A549 (cell line): ENCODE measurements at regions of chr22 and their contacts with region 1.

Region 1: GRCh38 chr22:40024201-40025061 is 29.7 kb downstream of the FAM83F start:
- DNase-seq: peak; percentile 62 to 75
- ATAC-seq: peak; percentile 86 to 96
- H3K4me3 ChIP-seq: no peak overlapping the region
- H3K27ac ChIP-seq: no peak overlapping the region
- H3K4me1 ChIP-seq: no peaks in the 10 kb centered on the region
- CTCF ChIP-seq: peak; percentile 83
- EP300 ChIP-seq: no peak
- POLR2A ChIP-seq: no peak
- RAD21 ChIP-seq: peak; percentile 89 to 90

Region 2: DNA sequence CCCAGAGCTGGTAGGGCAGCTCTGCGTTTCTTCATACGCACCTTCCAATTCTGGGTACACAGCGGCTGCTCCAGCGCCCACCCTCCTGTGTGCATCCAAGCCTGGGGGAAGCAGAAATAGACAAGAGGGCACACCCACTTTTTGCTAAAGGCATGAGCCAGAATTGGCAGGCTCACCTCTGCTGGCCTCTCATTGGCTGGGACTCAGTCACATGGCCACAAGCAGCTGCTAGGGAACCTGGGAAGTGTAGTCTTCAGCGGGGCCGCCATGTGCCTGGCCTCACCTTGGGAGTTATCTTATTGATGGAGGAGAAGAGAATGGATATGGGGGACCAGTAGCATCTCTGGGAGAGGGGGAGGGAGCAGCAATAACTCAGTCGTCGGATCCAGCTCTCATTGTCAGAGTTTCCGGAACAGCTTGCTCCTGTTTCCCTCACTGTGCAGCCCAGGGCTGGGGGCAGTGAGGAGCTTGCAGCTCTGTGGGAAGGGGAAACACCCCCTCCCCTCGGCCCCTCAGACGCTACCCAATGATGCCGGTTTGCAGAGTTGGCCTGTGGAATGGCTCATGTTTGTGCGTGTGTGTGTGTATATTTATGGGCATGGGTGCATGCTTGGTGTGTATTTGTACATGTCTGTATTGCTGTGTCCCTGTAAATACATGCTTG is 534.2 kb before region 1 on chr22:
- CTCF ChIA-PET with region 1: interaction called, 11 read pairs
- POLR2A ChIA-PET with region 1: no interaction called
- DNase-seq: peak; percentile 74 to 87
- ATAC-seq: peak; percentile 88 to 96
- H3K4me3 ChIP-seq: no peak overlapping the region
- H3K27ac ChIP-seq: no peak overlapping the region
- H3K4me1 ChIP-seq: no peaks in the 10 kb centered on the region
- CTCF ChIP-seq: no peak
- EP300 ChIP-seq: no peak
- POLR2A ChIP-seq: no peak
- RAD21 ChIP-seq: no peak

Region 3: DNA sequence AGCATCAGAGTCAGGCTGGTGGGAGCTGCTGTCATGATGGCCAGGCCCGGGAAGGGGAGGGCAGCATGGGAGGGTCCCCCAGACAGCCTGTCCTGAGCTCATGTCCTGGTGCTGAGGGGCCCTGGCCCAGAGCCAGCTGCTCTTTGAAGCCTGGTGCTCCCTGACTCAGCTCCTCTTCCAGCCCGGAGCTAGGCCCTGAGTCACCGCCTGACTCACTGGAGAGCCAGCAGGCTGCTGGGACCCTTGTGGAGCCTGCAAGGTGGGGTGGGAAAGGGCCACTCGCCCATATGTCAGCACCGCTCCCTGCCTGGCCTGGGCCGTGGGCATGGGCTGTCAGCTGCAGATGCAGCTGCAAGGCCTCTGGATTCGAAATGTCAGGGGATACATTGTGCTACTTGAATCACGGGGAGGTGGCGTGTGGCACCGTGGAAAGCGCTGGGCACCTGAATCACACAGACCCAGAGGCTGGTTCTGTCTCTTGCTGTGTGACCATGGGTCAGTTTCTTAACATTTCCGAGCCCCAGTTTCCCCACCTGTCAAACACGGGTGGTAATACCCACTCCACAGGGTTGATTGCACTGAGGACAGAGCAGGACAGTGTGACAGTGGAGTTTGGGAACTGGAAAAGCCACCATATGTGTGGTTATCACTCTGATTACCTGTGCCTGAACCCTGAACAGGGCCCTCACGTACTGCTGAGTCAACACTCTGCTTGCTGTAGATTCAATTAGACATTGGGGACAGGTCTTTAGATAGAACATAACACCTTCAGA is 449.5 kb before region 1 on chr22:
- CTCF ChIA-PET with region 1: interaction called, 10 read pairs
- POLR2A ChIA-PET with region 1: no interaction called
- DNase-seq: peak; percentile 54 to 78
- ATAC-seq: peak; percentile 75 to 87
- H3K4me3 ChIP-seq: no peak overlapping the region
- H3K27ac ChIP-seq: peak overlapping the region; percentile 55 to 80
- H3K4me1 ChIP-seq: peaks cover 18% of the 10 kb centered on the region
- CTCF ChIP-seq: no peak
- EP300 ChIP-seq: no peak
- POLR2A ChIP-seq: no peak
- RAD21 ChIP-seq: no peak

Region 4: DNA sequence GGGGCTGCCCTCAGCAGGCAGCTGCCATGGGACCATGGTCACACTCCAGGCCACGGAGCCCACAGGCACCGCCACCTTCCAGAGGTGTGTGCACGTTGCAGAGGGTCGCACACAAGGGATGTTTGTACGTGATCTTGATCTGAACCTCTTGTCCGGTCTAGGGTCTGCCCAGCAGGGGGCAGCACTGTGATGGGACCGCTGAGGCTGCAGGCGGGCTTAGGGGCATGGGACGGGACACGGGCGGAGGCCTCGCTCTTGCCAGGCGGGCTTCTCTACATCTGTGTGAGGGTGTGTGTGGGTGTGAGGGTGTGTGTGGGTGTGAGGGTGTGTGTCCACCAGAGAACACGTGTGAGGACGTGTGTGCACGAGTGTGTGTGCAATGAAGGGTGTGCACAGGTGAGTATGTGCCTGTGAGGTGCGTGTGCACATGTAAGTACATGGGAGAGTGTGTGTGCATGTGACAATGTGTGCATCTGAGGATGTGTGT is 401.5 kb before region 1 on chr22:
- CTCF ChIA-PET with region 1: interaction called, 11 read pairs
- POLR2A ChIA-PET with region 1: no interaction called
- DNase-seq: peak; percentile 18 to 46
- ATAC-seq: peak; percentile 32 to 86; a peak in 4 of 6 replicates
- H3K4me3 ChIP-seq: no peak overlapping the region
- H3K27ac ChIP-seq: no peak overlapping the region
- H3K4me1 ChIP-seq: no peaks in the 10 kb centered on the region
- CTCF ChIP-seq: peak; percentile 47
- EP300 ChIP-seq: no peak
- POLR2A ChIP-seq: no peak
- RAD21 ChIP-seq: peak; percentile 48 to 58; a peak in 4 of 5 replicates

Region 5: DNA sequence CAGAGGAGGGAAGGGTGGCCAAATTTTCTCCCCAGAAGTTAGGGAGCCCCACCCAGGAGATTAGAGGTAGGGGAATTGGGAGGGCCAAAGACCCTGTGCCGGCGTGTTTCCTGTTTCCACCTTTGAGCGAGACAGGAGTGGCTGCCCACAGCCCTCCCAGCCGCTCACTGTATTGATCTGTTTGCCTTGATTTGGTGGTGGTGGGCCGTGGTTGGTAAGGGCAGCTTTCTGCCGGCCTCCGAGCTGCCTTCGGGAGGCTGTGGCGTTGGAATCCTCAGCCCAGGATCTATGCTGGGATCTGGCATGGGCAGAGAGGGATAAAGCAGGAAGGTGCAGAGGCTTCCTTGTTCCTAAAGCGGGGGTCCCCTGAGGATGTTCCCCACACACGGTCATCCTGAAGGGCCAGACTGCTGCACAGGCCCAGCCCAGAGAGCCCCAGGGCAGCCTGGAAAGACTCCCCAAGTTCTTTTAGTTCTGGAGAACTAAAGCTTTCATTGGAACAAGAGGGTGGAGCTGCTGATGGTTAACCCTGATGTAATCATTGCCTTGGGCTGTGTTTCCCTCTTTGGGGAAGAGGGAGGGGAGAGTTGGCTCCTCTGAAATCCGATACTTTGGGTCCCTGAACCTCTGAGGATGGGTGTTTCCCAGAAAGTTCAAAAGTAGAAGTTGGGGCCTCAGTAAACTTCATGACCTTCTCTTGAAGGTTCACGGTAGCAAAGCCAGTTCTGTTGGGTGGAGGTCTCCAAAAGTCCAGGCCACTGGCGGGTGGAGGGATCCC is 22.4 kb before region 1 on chr22:
- CTCF ChIA-PET with region 1: interaction called, 10 read pairs
- POLR2A ChIA-PET with region 1: interaction called, 3 read pairs
- DNase-seq: no peak
- ATAC-seq: no peak
- H3K4me3 ChIP-seq: no peak overlapping the region
- H3K27ac ChIP-seq: no peak overlapping the region
- H3K4me1 ChIP-seq: peaks cover 26% of the 10 kb centered on the region; the same call in 2 of the 3 replicates
- CTCF ChIP-seq: no peak
- EP300 ChIP-seq: no peak
- POLR2A ChIP-seq: no peak
- RAD21 ChIP-seq: no peak

Region 6: DNA sequence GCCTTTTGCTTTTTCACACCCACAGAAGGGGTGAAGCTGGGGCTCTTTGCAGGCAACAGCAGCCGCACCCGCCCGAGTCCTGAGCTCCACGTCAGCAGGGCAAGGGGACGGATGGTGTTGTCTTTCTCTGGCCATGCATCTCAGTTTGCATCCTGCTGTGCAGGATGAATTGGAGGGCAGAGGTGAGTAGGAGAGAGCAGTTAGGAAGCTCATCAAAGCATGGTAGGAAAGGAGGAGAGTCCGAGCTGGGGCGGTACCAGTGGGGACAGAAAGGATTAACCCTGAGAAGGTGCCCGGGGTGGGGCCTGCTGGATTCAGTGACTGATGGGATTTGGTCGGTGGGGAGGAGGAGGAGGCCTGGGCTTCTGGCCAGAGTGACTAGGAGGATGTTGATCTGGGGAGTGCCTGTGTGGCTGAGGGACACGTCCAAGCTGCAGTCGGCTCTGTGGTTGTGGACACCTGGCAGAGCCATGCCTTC is 15.1 kb before region 1 on chr22:
- CTCF ChIA-PET with region 1: interaction called, 29 read pairs
- POLR2A ChIA-PET with region 1: interaction called, 3 read pairs
- DNase-seq: no peak
- ATAC-seq: no peak
- H3K4me3 ChIP-seq: no peak overlapping the region
- H3K27ac ChIP-seq: no peak overlapping the region
- H3K4me1 ChIP-seq: no peaks in the 10 kb centered on the region
- CTCF ChIP-seq: no peak
- EP300 ChIP-seq: no peak
- POLR2A ChIP-seq: no peak
- RAD21 ChIP-seq: no peak

Region 7: GRCh38 chr22:40036591-40037225 is 12.3 kb after region 1 on chr22:
- CTCF ChIA-PET with region 1: interaction called, 122 read pairs
- POLR2A ChIA-PET with region 1: no interaction called
- DNase-seq: peak; percentile 69 to 82
- ATAC-seq: peak; percentile 94 to 98
- H3K4me3 ChIP-seq: no peak overlapping the region
- H3K27ac ChIP-seq: no peak overlapping the region
- H3K4me1 ChIP-seq: no peaks in the 10 kb centered on the region
- CTCF ChIP-seq: peak; percentile 74
- EP300 ChIP-seq: no peak
- POLR2A ChIP-seq: no peak
- RAD21 ChIP-seq: peak; percentile 87 to 91

Region 8: DNA sequence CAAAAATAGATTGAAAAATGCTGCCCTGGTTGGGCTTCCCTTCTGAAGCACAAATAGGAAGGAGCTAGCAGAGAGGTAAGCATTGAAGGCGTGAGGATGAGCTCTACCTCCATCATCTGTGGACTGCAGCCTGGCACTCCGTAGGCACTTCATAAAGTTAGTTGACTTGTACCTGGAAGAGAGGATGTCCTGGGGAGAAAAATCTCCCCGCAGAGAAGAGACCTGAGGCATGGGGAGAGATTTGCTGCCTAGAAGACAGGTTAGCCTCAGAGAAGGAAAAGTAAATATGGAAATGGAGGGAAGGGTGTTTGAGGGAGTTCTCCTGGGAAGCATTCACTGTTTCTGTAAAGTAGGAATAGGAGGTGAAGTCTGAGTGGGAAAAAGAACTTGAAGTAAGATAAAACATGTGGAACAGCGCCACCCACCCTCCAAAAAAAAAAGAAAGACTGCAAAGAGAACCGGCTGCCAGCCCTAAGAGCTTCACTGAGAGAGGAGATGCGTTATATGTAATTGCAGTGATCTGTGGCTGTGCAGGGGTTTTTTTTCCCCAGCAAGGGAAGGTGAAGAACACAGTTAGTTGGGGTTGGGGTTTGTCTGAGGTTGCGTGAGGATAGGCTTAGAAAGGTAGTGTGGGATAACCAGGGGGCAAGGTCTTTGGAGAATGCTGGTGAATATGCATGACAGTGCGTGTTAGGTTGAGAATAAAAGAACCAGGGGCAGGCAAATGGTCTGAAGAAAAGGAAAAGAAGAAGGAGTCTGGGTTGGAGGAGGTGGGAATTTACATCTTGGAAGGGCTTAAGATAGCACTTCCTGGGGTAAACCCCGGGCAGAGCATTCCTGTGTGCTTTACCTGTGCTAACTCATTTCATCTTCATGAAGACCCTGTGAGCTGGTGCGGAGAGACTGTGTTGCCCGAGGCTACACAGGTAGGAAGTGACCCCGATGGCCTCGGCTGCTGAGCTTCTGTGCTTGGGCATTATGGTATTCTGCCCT is 169.3 kb after region 1 on chr22:
- CTCF ChIA-PET with region 1: no interaction called
- POLR2A ChIA-PET with region 1: no interaction called
- DNase-seq: peak; percentile 5 to 29
- ATAC-seq: peak; percentile 50 to 54; a peak in 3 of 6 replicates
- H3K4me3 ChIP-seq: no peak overlapping the region
- H3K27ac ChIP-seq: no peak overlapping the region
- H3K4me1 ChIP-seq: peaks cover 9% of the 10 kb centered on the region; the same call in 1 of the 3 replicates
- CTCF ChIP-seq: peak; percentile 25; the same call in 1 of the 3 replicates
- EP300 ChIP-seq: no peak
- POLR2A ChIP-seq: no peak
- RAD21 ChIP-seq: peak; percentile 34 to 53; a peak in 4 of 5 replicates

Region 9: DNA sequence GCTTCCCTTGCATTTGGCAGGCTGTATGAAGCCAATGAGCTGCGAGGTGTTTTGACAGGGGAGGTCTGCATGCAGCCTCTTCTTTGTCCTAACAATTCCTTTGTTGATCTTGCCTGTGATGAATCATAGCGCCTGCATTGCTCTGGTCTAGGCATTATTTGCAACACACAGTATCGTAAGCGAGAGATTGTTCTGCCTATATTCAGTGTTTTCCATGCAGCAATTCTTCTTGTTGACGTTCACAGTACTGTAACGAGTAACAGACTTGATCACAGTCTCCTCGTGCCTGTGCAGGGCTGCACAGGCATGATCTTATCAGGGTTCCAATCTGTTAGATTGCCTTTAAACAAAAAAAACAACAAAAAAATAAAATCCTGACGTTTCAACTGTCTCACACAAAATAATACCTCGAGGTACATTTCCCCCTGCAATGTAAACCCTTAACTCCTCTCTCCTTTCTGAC is 307.9 kb after region 1 on chr22:
- CTCF ChIA-PET with region 1: no interaction called
- POLR2A ChIA-PET with region 1: no interaction called
- DNase-seq: no peak
- ATAC-seq: no peak
- H3K4me3 ChIP-seq: no peak overlapping the region
- H3K27ac ChIP-seq: no peak overlapping the region
- H3K4me1 ChIP-seq: no peaks in the 10 kb centered on the region
- CTCF ChIP-seq: no peak
- EP300 ChIP-seq: no peak
- POLR2A ChIP-seq: no peak
- RAD21 ChIP-seq: no peak